Activated CD4-positive, alpha-beta memory T cell treated with anti-CD3 and anti-CD28 coated beads, Interleukin-2, amount 10 ng/mL, durations not matched to agents 7 days and 5 days (primary cell): ENCODE measurements at regions of chr11 and their contacts with region 1.

Region 1: GRCh38 chr11:108497317-108498045 is 703 bp downstream of the POGLUT3 start:
- DNase-seq: peak; percentile 72
- H3K4me3 Mint-ChIP-seq: peak overlapping the region; percentile 100
- H3K27ac Mint-ChIP-seq: peak overlapping the region; percentile 100
- H3K4me1 Mint-ChIP-seq: peaks cover 31% of the 10 kb centered on the region
- H3K27me3 Mint-ChIP-seq: no peaks in the 10 kb centered on the region

Region 2: DNA sequence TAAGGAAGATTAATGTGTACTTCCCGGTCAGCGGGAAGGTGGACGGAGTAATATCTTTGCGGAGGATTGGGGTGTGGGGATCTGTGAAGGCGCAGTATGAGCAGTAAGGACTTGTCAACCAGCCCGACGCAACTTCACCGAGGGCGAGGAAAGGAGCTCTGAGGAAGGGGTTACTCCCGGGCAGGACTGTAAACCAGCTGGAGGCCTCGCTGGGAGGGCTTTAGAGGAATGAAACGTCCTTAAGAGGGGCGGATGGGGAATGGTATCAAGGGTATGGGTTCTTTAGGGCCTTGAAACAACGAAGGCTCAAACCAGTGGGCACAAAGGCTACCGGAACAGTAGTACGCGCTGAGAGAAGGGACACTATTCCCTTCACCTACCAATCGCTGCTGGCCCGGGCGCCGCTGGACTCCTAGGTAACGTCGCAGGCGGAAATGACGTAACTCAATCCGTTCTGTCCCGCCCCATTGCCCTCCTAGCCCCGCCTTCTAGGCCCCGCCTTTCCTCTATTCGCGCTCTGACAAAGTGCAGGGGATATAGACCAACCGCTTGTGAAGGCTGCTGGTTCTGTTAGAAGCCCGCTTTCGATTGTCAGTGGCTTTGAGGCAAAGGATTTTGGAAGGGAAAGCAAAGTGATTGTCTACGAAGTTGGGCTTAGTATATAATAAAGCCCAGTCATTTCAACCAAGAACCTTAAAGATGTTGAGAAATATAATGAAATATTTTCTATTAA is 30.2 kb before region 1 on chr11 and contains the start of gene C11orf65:
- CTCF ChIA-PET with region 1: no interaction called
- POLR2A ChIA-PET with region 1: interaction called, 24 read pairs
- DNase-seq: peak; percentile 96
- H3K4me3 Mint-ChIP-seq: peak within 1 kb of the TSS; percentile 99
- H3K27ac Mint-ChIP-seq: peak within 1 kb of the TSS; percentile 100
- H3K4me1 Mint-ChIP-seq: peaks cover 21% of the 10 kb centered on the region
- H3K27me3 Mint-ChIP-seq: no peaks in the 10 kb centered on the region
- total RNA-seq, gene C11orf65: 0.58 to 1.2 TPM

Region 3: GRCh38 chr11:108685419-108686130 is 188.1 kb after region 1 on chr11:
- CTCF ChIA-PET with region 1: no interaction called
- POLR2A ChIA-PET with region 1: no interaction called
- DNase-seq: no peak
- H3K4me3 Mint-ChIP-seq: no peak overlapping the region
- H3K27ac Mint-ChIP-seq: no peak overlapping the region
- H3K4me1 Mint-ChIP-seq: no peaks in the 10 kb centered on the region
- H3K27me3 Mint-ChIP-seq: no peaks in the 10 kb centered on the region